ENCODE measurements at regions of chr18 and their contacts with region 1.

Region 1: GRCh38 chr18:45690975-45691815 is 32.8 kb upstream of the SLC14A1 start:
- DNase-seq: peak; percentile 73 to 78
- ATAC-seq: peak; percentile 68 to 90 (median 86)
- H3K4me3 ChIP-seq: no peak overlapping the region
- H3K27ac ChIP-seq: no peak overlapping the region
- H3K4me1 ChIP-seq: peaks cover 0 to 22% (median 0%) of the 10 kb centered on the region in 9 donors
- H3K27me3 ChIP-seq: peaks cover 0 to 10% (median 3%) of the 10 kb centered on the region in 7 donors
- CTCF ChIP-seq: peak; percentile 67 to 92 (median 83)

Region 2: DNA sequence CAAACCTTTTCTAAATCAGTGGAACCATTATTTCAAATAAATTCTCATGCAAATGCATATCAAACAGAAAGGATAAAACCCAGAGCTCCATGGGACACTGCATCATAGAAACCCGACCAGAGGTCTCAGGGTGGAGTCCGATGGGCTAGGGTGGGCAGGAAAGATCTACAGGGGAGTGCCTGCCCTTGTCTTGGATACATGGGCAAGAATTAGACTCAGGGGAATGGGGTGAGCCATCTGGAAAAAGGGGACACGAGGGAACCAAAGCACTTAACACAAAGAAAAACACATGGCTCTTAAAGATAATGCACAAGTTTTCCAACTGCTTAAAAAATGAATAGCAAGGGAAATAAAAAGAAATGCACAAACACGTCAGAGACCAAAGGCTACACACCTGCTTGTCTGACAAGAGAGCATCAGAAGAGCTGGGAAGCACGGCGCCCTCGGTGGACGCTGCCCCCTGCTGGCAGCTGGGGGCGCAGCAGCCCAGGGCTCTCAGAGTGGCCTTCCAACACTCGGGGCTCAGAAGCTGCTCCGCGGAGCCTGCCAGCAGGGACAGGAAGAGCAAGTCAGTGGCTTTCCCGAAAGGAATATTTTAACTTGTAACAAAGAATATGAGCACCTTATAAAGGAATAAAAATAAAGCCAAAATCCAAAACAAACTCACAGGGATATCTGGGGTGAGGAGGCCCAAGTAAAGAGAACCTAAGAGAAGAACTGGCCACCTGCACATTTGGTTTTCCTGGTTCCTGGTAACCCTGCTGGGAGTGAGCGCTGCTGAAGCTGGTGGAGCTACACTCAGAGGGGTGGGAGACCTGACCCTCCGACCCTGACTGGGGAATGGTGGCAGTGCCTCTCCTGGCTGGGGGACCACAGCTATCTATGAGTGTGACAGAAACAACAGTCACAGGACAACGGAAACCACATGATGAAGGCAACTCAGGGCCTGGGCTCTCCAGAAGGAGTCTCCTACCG is 188.8 kb after region 1 on chr18:
- intact Hi-C with region 1: loop called in 9 of 10 experiments (anchors 1 to 5 kb)
- DNase-seq: peak; percentile 49 to 77
- ATAC-seq: peak; percentile 81 to 97 (median 94)
- H3K4me3 ChIP-seq: no peak overlapping the region
- H3K27ac ChIP-seq: peak overlapping the region in 1 of 10 donors; percentile 12
- H3K4me1 ChIP-seq: peaks cover 0 to 9% (median 3%) of the 10 kb centered on the region in 9 donors
- H3K27me3 ChIP-seq: no peaks in the 10 kb centered on the region
- CTCF ChIP-seq: peak; percentile 98 to 100 (median 99)

Region 3: GRCh38 chr18:45967007-45967706 is 276.0 kb after region 1 on chr18 and contains the start of gene EPG5:
- intact Hi-C with region 1: loop called in 3 of 10 experiments (anchors 2 to 10 kb)
- DNase-seq: peak; percentile 94 to 96
- ATAC-seq: peak; percentile 99 to 100 (median 100)
- H3K4me3 ChIP-seq: peak within 1 kb of the TSS; percentile 54 to 99 (median 82)
- H3K27ac ChIP-seq: peak within 1 kb of the TSS in 9 of 10 donors; percentile 57 to 83 (median 71)
- H3K4me1 ChIP-seq: peaks cover 0 to 40% (median 29%) of the 10 kb centered on the region in 9 donors
- H3K27me3 ChIP-seq: no peaks in the 10 kb centered on the region
- CTCF ChIP-seq: no peak
- total RNA-seq, gene EPG5: 16.7 to 26.3 (median 21.0) TPM

Region 4: DNA sequence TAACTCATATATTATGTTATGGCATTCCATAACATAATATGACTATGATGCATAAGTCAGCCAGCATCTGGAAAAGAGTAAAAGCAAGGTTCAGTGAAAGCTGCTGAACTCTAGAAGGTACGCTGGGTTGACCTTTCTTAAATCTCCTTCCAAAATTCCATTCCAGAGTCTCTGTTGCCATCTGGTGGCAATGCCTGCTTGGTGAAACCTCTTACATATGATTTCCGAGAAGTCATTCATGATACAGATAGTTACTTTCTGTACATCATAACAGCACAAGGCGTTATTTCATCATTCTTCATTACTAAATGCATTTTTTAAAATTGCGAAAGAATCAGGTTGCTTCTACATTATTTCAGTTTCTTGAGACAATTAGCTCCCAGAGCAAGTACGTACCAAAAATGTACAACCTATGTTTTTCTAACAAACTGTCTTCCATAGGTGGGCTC is 282.9 kb after region 1 on chr18:
- intact Hi-C with region 1: loop called in 4 of 10 experiments (anchors 2 to 10 kb)
- DNase-seq: peak in 1 of 2 donors; percentile 66
- ATAC-seq: peak; percentile 58 to 81 (median 70)
- H3K4me3 ChIP-seq: no peak overlapping the region
- H3K27ac ChIP-seq: peak overlapping the region in 1 of 10 donors; percentile 54
- H3K4me1 ChIP-seq: peaks cover 0 to 12% (median 0%) of the 10 kb centered on the region in 9 donors
- H3K27me3 ChIP-seq: no peaks in the 10 kb centered on the region
- CTCF ChIP-seq: peak; percentile 20 to 79 (median 71)

Region 5: GRCh38 chr18:46067431-46068007 is 376.3 kb after region 1 on chr18:
- intact Hi-C with region 1: loop called in 4 of 10 experiments (anchors 5 to 10 kb)
- DNase-seq: no peak
- ATAC-seq: peak in 1 of 8 donors; percentile 27
- H3K4me3 ChIP-seq: no peak overlapping the region
- H3K27ac ChIP-seq: no peak overlapping the region
- H3K4me1 ChIP-seq: peaks cover 3 to 41% (median 10%) of the 10 kb centered on the region in 9 donors
- H3K27me3 ChIP-seq: no peaks in the 10 kb centered on the region
- CTCF ChIP-seq: no peak

Measured in heart right ventricle (tissue), 16 donors.